ENCODE measurements at regions of chr4 and their contacts with region 1.

Region 1: GRCh38 chr4:141133146-141133998 is at the start of gene RNF150:
- DNase-seq: peak; percentile 71 to 84
- ATAC-seq: peak; percentile 82 to 91 (median 86)
- H3K4me3 ChIP-seq: peak within 1 kb of the TSS; percentile 64 to 93 (median 88)
- H3K27ac ChIP-seq: peak within 1 kb of the TSS; percentile 68 to 95 (median 90)
- H3K4me1 ChIP-seq: peaks cover 4 to 24% (median 12%) of the 10 kb centered on the region in 9 donors
- H3K27me3 ChIP-seq: peaks cover 0 to 63% (median 6%) of the 10 kb centered on the region in 7 donors
- CTCF ChIP-seq: peak; percentile 42 to 79 (median 64)
- total RNA-seq, gene RNF150: 59.7 to 131 (median 99.7) TPM

Region 2: DNA sequence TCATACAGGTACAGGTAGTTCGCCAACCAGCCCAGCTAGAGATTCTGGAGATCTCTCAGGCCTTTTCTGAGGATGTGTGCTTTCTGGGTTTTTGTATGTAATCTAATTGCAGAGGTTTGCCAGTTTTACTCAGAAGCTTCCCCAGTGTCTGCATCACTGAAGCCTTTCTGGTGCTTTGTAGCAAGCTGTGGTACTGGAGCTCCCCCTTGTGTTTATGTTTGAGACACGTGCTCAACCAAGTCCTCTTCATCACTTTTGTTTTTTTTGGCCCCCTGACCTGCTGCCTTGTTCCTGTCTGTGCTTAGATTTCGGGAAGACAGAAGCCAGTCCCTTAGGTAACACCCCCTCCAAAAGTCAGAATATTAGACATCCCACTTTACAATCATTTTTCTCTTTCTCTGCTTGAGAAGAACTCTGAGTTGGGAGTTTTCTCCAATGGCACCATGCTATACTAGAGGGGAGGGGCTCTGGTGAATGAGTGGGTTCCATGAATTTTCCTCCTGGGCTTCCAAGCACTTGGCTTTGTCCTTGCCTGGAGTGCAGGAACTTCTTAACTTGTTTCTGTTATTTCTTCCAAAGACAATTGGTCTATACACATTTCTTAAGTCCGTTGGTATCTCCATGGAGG is 248.8 kb before region 1 on chr4:
- intact Hi-C with region 1: loop called in 5 of 10 experiments (anchors 5 kb)
- DNase-seq: peak in 1 of 2 donors; percentile 51
- ATAC-seq: peak; percentile 52 to 77 (median 70)
- H3K4me3 ChIP-seq: no peak overlapping the region
- H3K27ac ChIP-seq: peak overlapping the region in 1 of 10 donors; percentile 10
- H3K4me1 ChIP-seq: peaks cover 0 to 32% (median 4%) of the 10 kb centered on the region in 9 donors
- H3K27me3 ChIP-seq: no peaks in the 10 kb centered on the region
- CTCF ChIP-seq: peak; percentile 37 to 74 (median 69)

Region 3: DNA sequence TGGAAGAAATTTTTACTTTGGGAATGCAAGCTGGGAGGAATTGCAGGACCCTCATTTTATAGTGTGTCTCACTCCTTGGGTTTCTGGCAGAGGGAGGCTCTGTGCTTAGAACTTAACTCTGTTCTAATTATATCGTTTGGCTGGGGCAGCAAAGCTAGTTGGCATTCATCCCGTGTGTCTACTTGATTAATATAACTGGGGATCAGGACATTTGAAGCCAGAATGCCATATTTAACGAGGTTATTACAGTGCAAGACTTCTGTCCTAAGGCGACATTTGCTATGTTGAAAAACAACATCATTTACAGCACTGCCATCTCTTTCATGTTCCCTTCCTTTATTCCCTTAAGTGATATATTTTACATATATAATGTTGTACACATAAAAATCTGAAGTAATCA is 198.1 kb before region 1 on chr4:
- intact Hi-C with region 1: loop called in 5 of 10 experiments (anchors 5 kb)
- DNase-seq: peak in 1 of 2 donors; percentile 50
- ATAC-seq: peak; percentile 43 to 85 (median 74)
- H3K4me3 ChIP-seq: no peak overlapping the region
- H3K27ac ChIP-seq: peak overlapping the region in 8 of 10 donors; percentile 1 to 66 (median 38)
- H3K4me1 ChIP-seq: peaks cover 0 to 61% (median 28%) of the 10 kb centered on the region in 9 donors
- H3K27me3 ChIP-seq: no peaks in the 10 kb centered on the region
- CTCF ChIP-seq: no peak

Region 4: GRCh38 chr4:140982613-140983340 is 150.6 kb before region 1 on chr4:
- intact Hi-C with region 1: loop called in 5 of 10 experiments (anchors 5 to 10 kb)
- DNase-seq: no peak
- ATAC-seq: peak in 7 of 8 donors; percentile 39 to 88 (median 79)
- H3K4me3 ChIP-seq: no peak overlapping the region
- H3K27ac ChIP-seq: peak overlapping the region in 6 of 10 donors; percentile 1 to 77 (median 56)
- H3K4me1 ChIP-seq: peaks cover 0 to 59% (median 12%) of the 10 kb centered on the region in 9 donors
- H3K27me3 ChIP-seq: no peaks in the 10 kb centered on the region
- CTCF ChIP-seq: peak in 1 of 9 donors; percentile 4

Region 5: GRCh38 chr4:140989944-140990343 is 143.4 kb before region 1 on chr4:
- intact Hi-C with region 1: loop called in 6 of 10 experiments (anchors 5 to 10 kb)
- DNase-seq: no peak
- ATAC-seq: peak in 7 of 8 donors; percentile 66 to 87 (median 82)
- H3K4me3 ChIP-seq: no peak overlapping the region
- H3K27ac ChIP-seq: peak overlapping the region in 7 of 10 donors; percentile 7 to 67 (median 52)
- H3K4me1 ChIP-seq: peaks cover 0 to 39% (median 22%) of the 10 kb centered on the region in 9 donors
- H3K27me3 ChIP-seq: no peaks in the 10 kb centered on the region
- CTCF ChIP-seq: no peak

Region 6: GRCh38 chr4:140996766-140997165 is 136.6 kb before region 1 on chr4:
- intact Hi-C with region 1: loop called in 4 of 10 experiments (anchors 5 kb)
- DNase-seq: no peak
- ATAC-seq: no peak
- H3K4me3 ChIP-seq: no peak overlapping the region
- H3K27ac ChIP-seq: peak overlapping the region in 3 of 10 donors; percentile 13 to 65 (median 31)
- H3K4me1 ChIP-seq: peaks cover 2 to 62% (median 16%) of the 10 kb centered on the region in 9 donors
- H3K27me3 ChIP-seq: no peaks in the 10 kb centered on the region
- CTCF ChIP-seq: peak in 1 of 9 donors; percentile 36

Region 7: GRCh38 chr4:141002323-141002805 is 131.0 kb before region 1 on chr4:
- intact Hi-C with region 1: loop called in 2 of 10 experiments (anchors 5 kb)
- DNase-seq: no peak
- ATAC-seq: peak; percentile 74 to 93 (median 89)
- H3K4me3 ChIP-seq: peak overlapping the region in 1 of 10 donors; percentile 9
- H3K27ac ChIP-seq: peak overlapping the region; percentile 46 to 79 (median 66)
- H3K4me1 ChIP-seq: peaks cover 0 to 55% (median 13%) of the 10 kb centered on the region in 9 donors
- H3K27me3 ChIP-seq: no peaks in the 10 kb centered on the region
- CTCF ChIP-seq: no peak